Activated CD8-positive, alpha-beta T cell treated with anti-CD3 and anti-CD28 coated beads, Interleukin-2, amount 10 ng/mL, durations not matched to agents 7 days and 5 days (primary cell): ENCODE measurements at regions of chr18 and their contacts with region 1.

Region 1: DNA sequence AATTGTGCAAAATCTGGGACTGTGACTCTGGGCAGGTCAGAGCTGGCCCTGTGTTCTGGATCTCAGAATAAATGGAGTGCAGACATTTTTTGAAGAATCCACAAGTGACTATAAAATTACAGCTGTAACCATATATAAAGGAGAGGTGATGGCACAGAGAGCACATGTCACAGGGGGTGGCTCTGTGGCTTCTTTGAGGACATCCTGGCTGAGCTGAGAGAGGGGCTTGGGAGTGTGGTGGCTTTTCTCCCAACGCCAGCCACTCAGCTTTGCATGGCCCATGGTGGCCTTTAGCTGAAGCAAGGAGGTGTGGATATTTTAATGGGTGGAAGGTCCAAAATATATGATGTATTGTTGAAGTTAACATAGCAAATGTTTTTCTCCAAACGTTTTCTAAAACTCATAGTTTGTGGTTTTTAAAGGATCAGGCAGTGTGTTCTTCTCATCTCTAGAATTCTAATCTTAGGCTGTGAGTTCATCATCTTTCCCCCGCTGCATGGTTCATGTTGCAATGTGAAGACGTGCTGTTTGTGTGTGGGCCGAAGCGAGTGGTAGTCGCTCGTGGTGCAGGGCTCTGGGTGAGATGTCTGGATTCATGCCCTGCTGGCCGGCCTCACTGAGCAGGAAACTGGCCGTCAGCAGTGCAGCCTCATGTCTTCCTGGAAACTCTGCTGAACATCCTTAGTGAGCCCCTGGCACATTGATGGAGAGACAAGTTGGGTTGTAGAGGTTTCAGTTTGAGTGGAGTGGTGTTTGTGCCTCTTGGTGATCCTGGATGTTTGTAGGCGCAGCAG is 109.9 kb downstream of the ZNF236 start:
- DNase-seq: no peak
- ATAC-seq: no peak
- H3K4me3 Mint-ChIP-seq: no peak overlapping the region
- H3K27ac Mint-ChIP-seq: no peak overlapping the region
- H3K4me1 Mint-ChIP-seq: peaks cover 5% of the 10 kb centered on the region
- H3K27me3 Mint-ChIP-seq: no peaks in the 10 kb centered on the region

Region 2: DNA sequence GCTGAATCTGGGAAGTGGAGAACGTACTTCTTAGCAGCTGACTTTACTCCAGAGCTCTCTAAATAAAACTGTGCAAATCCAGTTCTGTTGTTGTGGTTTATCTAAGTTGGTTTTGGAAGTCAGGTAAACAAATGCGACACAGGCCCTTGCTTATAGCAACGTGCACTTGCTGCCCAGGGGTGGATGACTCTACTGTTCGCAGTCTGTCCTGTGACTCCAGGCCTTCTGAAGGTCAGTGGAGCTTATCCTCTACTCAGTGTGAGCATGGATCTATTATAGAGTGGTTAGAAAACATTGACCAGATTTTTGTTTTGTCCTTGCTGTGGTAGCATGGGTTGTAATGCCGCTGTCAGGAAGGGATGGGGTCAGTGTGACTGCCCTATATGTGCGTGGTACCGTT is 20.8 kb before region 1 on chr18:
- CTCF ChIA-PET with region 1: no interaction called
- POLR2A ChIA-PET with region 1: no interaction called
- DNase-seq: no peak
- ATAC-seq: no peak
- H3K4me3 Mint-ChIP-seq: no peak overlapping the region
- H3K27ac Mint-ChIP-seq: no peak overlapping the region
- H3K4me1 Mint-ChIP-seq: no peaks in the 10 kb centered on the region
- H3K27me3 Mint-ChIP-seq: no peaks in the 10 kb centered on the region

Region 3: DNA sequence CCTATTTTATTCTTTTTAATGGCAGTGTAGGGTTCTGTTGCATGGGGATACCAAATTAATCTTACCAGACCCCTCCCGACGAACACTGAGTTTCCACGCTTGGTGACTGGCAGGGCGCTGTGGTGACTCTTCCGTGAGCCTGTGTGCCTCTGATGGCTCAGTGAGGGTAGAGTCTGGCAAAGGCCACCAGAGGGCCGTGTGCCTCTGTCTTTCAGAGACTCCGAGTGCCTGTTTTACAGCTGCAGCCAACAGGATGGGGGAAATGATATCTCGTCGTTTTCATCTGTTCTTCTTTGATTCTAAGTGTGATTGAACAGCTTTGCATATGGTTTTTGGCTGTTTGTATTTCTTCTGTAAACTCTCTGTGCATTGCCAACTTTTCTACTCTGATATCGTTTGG is 10.1 kb before region 1 on chr18:
- CTCF ChIA-PET with region 1: interaction called, 13 read pairs
- POLR2A ChIA-PET with region 1: no interaction called
- DNase-seq: peak; percentile 67
- ATAC-seq: peak; percentile 98
- H3K4me3 Mint-ChIP-seq: no peak overlapping the region
- H3K27ac Mint-ChIP-seq: no peak overlapping the region
- H3K4me1 Mint-ChIP-seq: peaks cover 12% of the 10 kb centered on the region
- H3K27me3 Mint-ChIP-seq: no peaks in the 10 kb centered on the region

Region 4: GRCh38 chr18:76953156-76953555 is 20.9 kb after region 1 on chr18:
- CTCF ChIA-PET with region 1: no interaction called
- POLR2A ChIA-PET with region 1: no interaction called
- DNase-seq: no peak
- ATAC-seq: no peak
- H3K4me3 Mint-ChIP-seq: no peak overlapping the region
- H3K27ac Mint-ChIP-seq: no peak overlapping the region
- H3K4me1 Mint-ChIP-seq: peaks cover 26% of the 10 kb centered on the region
- H3K27me3 Mint-ChIP-seq: no peaks in the 10 kb centered on the region